ENCODE measurements at regions of chr6 and their contacts with region 1.

Region 1: DNA sequence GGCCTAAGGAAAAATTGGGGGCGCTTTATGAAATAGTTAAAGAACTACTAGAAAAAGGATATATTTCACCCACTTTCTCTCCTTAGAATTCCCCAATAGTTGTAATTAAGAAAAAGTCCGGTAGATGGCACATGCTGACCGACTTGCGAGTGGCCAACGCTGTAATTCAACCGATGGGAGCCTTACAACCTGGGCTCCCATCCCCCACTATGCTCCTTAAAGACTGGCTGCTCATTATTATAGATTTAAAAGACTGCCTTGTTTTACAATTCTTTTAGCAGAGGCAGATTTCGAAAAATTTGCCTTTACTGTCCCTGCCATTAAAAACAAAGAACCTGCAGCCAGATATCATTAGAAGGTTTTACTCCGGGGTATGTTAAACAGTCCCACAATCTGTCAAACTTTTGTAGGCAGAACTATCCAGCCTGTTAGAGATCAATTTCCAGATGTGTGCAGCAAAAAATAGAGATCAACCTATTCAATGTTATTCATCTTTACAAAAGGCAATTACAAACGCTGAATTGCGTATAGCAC is 58.5 kb upstream of the PRSS16 start:
- DNase-seq: peak; percentile 33 to 62 (median 58)
- H3K4me3 ChIP-seq: peak overlapping the region; percentile 51 to 87 (median 81)
- H3K4me3 Mint-ChIP-seq: peak overlapping the region; percentile 92 to 96
- H3K27ac ChIP-seq: no peak overlapping the region
- H3K27ac Mint-ChIP-seq: peak overlapping the region in 4 of 7 donors; percentile 41 to 74 (median 65)
- H3K4me1 ChIP-seq: peaks cover 13% of the 10 kb centered on the region in 2 donors
- H3K4me1 Mint-ChIP-seq: peaks cover 18% of the 10 kb centered on the region
- H3K27me3 ChIP-seq: peaks cover 0 to 11% of the 10 kb centered on the region in 2 donors
- H3K27me3 Mint-ChIP-seq: peaks cover 10 to 22% (median 16%) of the 10 kb centered on the region in 3 donors
- CTCF ChIP-seq: peak; percentile 74

Region 2: DNA sequence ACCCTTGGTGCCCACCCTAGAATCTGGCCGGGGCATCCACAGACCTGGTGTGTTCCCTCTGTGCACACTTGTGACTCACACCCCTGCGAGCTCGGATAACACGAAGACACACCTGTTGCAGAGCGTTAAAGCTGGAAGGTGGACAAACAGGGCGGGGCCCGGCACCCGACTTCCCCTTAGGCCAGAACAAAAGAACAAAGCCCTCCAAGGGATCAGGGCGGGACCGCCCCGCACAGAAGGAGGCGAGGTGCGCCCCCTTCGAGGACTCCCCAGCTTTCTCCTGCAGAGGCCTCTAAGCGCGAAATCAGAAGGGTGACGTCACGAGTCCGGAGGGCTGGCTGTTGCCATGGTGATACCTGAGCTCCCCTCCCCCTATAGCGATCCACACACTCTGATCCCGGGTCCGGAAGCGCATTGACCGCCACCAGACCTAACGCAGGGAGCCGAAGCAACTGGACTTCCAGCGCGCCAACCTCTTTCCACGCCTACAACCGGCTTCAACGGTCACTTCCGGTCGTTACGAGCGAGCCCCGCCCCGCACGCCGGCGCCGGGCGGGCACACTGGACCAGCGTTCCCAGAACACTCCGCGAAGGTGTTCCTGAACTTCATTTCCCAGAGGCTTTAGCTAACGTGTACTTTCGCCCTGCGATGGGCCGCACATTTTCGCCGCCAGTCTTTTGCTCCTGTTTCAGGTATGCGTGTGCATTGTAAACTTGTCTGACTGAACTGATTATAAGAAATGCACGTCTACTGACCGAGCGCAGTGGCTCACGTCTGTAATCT is 283.9 kb after region 1 on chr6 and contains the start of gene ZNF184:
- intact Hi-C with region 1: loop called in 1 of 2 experiments (anchors 10 kb)
- DNase-seq: peak; percentile 87 to 93 (median 91)
- H3K4me3 ChIP-seq: peak within 1 kb of the TSS; percentile 55 to 88 (median 81)
- H3K4me3 Mint-ChIP-seq: peak within 1 kb of the TSS; percentile 97
- H3K27ac ChIP-seq: peak within 1 kb of the TSS; percentile 75 to 89
- H3K27ac Mint-ChIP-seq: peak within 1 kb of the TSS; percentile 89 to 98 (median 95)
- H3K4me1 ChIP-seq: peaks cover 12 to 16% of the 10 kb centered on the region in 2 donors
- H3K4me1 Mint-ChIP-seq: peaks cover 19% of the 10 kb centered on the region
- H3K27me3 ChIP-seq: no peaks in the 10 kb centered on the region
- H3K27me3 Mint-ChIP-seq: peaks cover 0 to 3% (median 2%) of the 10 kb centered on the region in 3 donors
- CTCF ChIP-seq: no peak
- polyA plus RNA-seq, gene ZNF184: 1.00 to 1.5 (median 1.5) TPM

Region 3: GRCh38 chr6:27795697-27796494 is 606.9 kb after region 1 on chr6:
- intact Hi-C with region 1: loop called in 1 of 2 experiments (anchors 5 kb)
- DNase-seq: peak; percentile 74 to 93 (median 85)
- H3K4me3 ChIP-seq: no peak overlapping the region
- H3K4me3 Mint-ChIP-seq: no peak overlapping the region
- H3K27ac ChIP-seq: no peak overlapping the region
- H3K27ac Mint-ChIP-seq: no peak overlapping the region
- H3K4me1 ChIP-seq: peaks cover 19 to 22% of the 10 kb centered on the region in 2 donors
- H3K4me1 Mint-ChIP-seq: peaks cover 28% of the 10 kb centered on the region
- H3K27me3 ChIP-seq: peaks cover 3 to 9% of the 10 kb centered on the region in 2 donors
- H3K27me3 Mint-ChIP-seq: peaks cover 9 to 12% (median 11%) of the 10 kb centered on the region in 3 donors
- CTCF ChIP-seq: peak; percentile 81